ENCODE measurements at regions of chr6 and their contacts with region 1.

Region 1: GRCh38 chr6:34414999-34415858 is 10.6 kb downstream of the RPS10 start:
- DNase-seq: peak; percentile 50 to 68 (median 51)
- H3K4me3 ChIP-seq: no peak overlapping the region
- H3K4me3 Mint-ChIP-seq: no peak overlapping the region
- H3K27ac ChIP-seq: no peak overlapping the region
- H3K27ac Mint-ChIP-seq: peak overlapping the region in 4 of 7 donors; percentile 2 to 86 (median 16)
- H3K4me1 ChIP-seq: no peaks in the 10 kb centered on the region
- H3K4me1 Mint-ChIP-seq: peaks cover 3 to 19% (median 5%) of the 10 kb centered on the region in 4 donors
- H3K27me3 ChIP-seq: no peaks in the 10 kb centered on the region
- H3K27me3 Mint-ChIP-seq: no peaks in the 10 kb centered on the region

Region 2: DNA sequence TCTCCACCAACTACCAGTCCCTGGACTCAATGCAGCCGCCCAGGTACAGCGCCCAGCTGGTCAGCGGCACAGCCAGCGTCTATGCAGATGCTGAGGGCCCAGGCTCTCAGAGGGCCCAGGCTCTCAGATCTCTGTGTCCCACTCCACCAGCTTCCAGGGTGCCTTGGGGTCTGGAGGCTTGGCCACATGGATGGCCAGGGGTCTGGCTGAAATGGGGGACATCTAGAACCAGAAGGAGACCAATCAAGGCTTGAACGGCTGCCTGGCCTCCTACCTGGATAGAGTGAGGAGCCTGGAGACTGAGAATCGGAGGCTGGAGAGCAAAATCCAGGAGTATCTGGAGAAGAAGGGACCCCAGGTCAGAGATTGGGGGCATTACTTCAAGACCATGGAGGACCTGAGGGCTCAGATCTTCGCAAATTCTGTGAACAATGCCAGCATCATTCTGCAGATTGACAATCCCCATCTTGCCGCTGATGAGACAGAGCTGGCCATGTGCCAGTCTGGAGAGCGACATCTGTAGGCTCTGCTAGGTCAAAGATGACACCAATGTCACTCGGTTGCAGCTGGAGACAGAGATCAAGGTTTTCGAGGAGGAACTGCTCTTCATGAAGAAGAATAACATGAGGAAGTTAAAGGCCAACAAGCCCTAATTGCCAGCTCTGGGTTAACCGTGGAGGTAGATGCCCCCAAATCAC is 225.3 kb before region 1 on chr6:
- CTCF ChIA-PET with region 1: interaction called, 60 read pairs
- POLR2A ChIA-PET with region 1: no interaction called
- intact Hi-C with region 1: no loop called
- DNase-seq: peak in 4 of 5 donors; percentile 26 to 54 (median 44)
- H3K4me3 ChIP-seq: no peak overlapping the region
- H3K4me3 Mint-ChIP-seq: no peak overlapping the region
- H3K27ac ChIP-seq: no peak overlapping the region
- H3K27ac Mint-ChIP-seq: peak overlapping the region in 1 of 7 donors; percentile 54
- H3K4me1 ChIP-seq: peaks cover 3% of the 10 kb centered on the region
- H3K4me1 Mint-ChIP-seq: peaks cover 0 to 11% (median 6%) of the 10 kb centered on the region in 4 donors
- H3K27me3 ChIP-seq: no peaks in the 10 kb centered on the region
- H3K27me3 Mint-ChIP-seq: no peaks in the 10 kb centered on the region

Region 3: DNA sequence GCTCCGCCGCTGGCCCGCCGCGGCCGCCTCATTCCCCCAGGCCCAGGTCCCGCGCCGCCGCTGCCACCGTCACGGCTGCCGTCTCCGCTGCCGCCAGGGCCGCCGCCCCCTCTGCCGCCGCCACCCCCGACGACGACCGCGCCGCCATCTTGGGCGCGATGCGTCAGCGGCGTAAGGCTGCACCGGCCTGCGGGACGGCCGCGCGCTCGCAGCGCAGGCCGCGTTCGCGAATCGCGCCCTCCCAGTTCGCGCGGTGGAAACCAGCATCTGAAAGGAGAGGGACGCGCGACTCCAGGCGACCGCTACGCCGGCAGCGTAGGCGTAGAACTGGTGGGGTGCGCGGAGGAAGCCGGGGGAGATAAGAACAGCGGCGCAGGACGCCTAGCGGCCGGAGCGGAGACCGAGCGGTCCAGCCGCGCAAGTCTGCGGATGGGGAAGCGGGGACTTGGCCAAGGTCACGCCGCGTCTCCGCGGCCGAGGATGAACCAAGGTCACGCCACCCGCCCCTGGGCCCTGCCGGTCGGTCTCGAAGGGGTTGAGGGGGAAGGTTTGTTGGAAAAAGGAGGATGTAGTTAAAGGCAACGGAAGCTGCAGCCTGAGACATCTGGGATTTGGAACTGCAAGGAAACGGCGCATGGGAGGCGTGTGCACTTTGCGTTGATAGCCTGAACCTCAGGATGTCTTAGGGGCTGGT is 22.6 kb before region 1 on chr6 and contains the start of gene NUDT3:
- CTCF ChIA-PET with region 1: interaction called, 18 read pairs
- POLR2A ChIA-PET with region 1: interaction called, 3 read pairs
- intact Hi-C with region 1: no loop called
- DNase-seq: peak; percentile 92 to 97 (median 93)
- H3K4me3 ChIP-seq: peak within 1 kb of the TSS; percentile 73 to 78
- H3K4me3 Mint-ChIP-seq: peak within 1 kb of the TSS in 7 of 8 donors; percentile 74 to 99 (median 95)
- H3K27ac ChIP-seq: peak within 1 kb of the TSS; percentile 89
- H3K27ac Mint-ChIP-seq: peak within 1 kb of the TSS in 6 of 7 donors; percentile 75 to 96 (median 95)
- H3K4me1 ChIP-seq: peaks cover 24% of the 10 kb centered on the region
- H3K4me1 Mint-ChIP-seq: peaks cover 13 to 27% (median 18%) of the 10 kb centered on the region in 4 donors
- H3K27me3 ChIP-seq: no peaks in the 10 kb centered on the region
- H3K27me3 Mint-ChIP-seq: no peaks in the 10 kb centered on the region
- total RNA-seq, gene NUDT3: 25.9 TPM

Region 4: DNA sequence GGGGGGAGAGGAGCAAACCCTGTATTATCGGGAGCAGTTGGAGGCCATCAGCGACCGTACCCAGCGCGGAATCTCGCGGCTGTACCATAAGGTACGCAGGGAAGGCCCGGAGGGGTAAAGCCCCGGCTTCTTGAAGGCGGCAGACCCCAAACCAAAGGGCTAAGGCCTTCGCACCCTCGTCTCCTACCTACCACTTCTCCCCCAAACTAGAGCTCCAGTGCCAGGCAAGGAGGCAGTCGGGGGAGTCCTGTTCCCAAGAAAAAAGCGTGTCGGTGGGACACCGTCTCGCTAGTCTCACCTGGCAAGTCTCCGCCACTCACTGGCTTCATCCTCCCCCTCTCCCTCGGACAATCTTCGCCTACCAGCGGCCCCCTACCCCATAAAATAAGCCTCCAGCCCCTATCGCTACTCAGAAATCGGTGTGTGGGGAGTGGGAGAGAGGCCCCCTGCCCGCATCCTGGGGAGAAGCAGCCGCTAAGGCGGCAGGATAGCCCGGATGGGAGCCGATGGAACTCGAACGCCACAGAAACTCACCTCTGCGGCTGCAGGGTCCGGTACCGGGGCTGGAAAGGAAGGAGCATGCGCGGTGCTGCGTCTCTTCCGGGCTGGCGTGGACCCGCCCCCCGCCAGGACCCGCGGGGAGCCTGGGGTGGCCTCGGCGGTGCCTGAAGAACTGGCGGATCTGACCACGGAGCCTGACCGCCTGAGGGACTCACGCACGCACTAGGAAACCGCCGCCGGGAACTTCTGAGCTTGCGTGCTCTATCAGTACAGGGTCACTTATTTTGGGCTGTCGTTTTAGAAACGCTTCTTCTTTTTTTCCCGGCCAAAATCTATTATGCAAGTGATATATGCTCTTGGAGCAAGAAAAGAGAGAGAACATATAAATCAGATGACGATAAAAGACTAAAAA is 10.5 kb after region 1 on chr6 and contains the start of gene RPS10:
- CTCF ChIA-PET with region 1: interaction called, 11 read pairs
- POLR2A ChIA-PET with region 1: interaction called, 19 read pairs
- intact Hi-C with region 1: no loop called
- DNase-seq: peak; percentile 85 to 90 (median 87)
- H3K4me3 ChIP-seq: peak within 1 kb of the TSS; percentile 80 to 95
- H3K4me3 Mint-ChIP-seq: peak within 1 kb of the TSS; percentile 97 to 99 (median 98)
- H3K27ac ChIP-seq: peak within 1 kb of the TSS; percentile 94
- H3K27ac Mint-ChIP-seq: peak within 1 kb of the TSS; percentile 96 to 99 (median 97)
- H3K4me1 ChIP-seq: peaks cover 30% of the 10 kb centered on the region
- H3K4me1 Mint-ChIP-seq: peaks cover 16 to 42% (median 32%) of the 10 kb centered on the region in 4 donors
- H3K27me3 ChIP-seq: no peaks in the 10 kb centered on the region
- H3K27me3 Mint-ChIP-seq: no peaks in the 10 kb centered on the region
- total RNA-seq, gene RPS10: 2,689 to 2,757 TPM

Region 5: GRCh38 chr6:34595332-34596184 is 180.3 kb after region 1 on chr6:
- CTCF ChIA-PET with region 1: no interaction called
- POLR2A ChIA-PET with region 1: no interaction called
- intact Hi-C with region 1: no loop called
- DNase-seq: no peak
- H3K4me3 ChIP-seq: no peak overlapping the region
- H3K4me3 Mint-ChIP-seq: no peak overlapping the region
- H3K27ac ChIP-seq: no peak overlapping the region
- H3K27ac Mint-ChIP-seq: peak overlapping the region in 2 of 7 donors; percentile 25 to 80
- H3K4me1 ChIP-seq: peaks cover 23% of the 10 kb centered on the region
- H3K4me1 Mint-ChIP-seq: peaks cover 40 to 66% (median 54%) of the 10 kb centered on the region in 4 donors
- H3K27me3 ChIP-seq: no peaks in the 10 kb centered on the region
- H3K27me3 Mint-ChIP-seq: no peaks in the 10 kb centered on the region